Natural killer cell (primary cell): ENCODE measurements at regions of chr4 and their contacts with region 1.

Region 1: GRCh38 chr4:77819843-77820648 is 878 bp upstream of the CNOT6L start:
- DNase-seq: peak; percentile 95 to 98
- ATAC-seq: peak; percentile 72 to 90 (median 77)
- H3K4me3 ChIP-seq: peak overlapping the region; percentile 78
- H3K4me3 Mint-ChIP-seq: peak overlapping the region; percentile 88
- H3K27ac ChIP-seq: peak overlapping the region; percentile 95
- H3K27ac Mint-ChIP-seq: peak overlapping the region; percentile 99 to 100
- H3K4me1 ChIP-seq: peaks cover 34% of the 10 kb centered on the region
- H3K4me1 Mint-ChIP-seq: peaks cover 59 to 67% of the 10 kb centered on the region in 2 donors
- H3K27me3 ChIP-seq: no peaks in the 10 kb centered on the region
- H3K27me3 Mint-ChIP-seq: no peaks in the 10 kb centered on the region
- CTCF ChIP-seq: no peak

Region 2: DNA sequence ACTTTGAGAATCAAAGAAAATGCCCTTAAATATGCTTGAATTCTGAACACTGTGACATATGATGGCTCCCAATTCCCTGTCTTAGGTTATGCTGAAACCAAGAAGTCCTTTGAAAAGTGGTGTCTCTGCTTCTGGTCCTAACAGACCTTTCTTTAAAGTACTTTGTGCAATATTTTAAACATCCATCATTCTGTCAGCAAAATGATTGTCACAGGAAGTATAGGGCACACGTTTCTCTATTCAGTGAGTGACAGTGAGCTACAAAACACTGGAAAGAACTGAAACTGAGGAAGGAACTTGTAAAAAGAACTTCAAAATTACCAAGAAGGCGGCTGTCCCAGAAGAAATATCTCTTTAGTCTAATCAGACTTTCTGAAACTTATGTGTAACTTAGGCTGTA is 1659.7 kb before region 1 on chr4:
- intact Hi-C with region 1: no loop called
- DNase-seq: no peak
- ATAC-seq: no peak
- H3K4me3 ChIP-seq: no peak overlapping the region
- H3K4me3 Mint-ChIP-seq: no peak overlapping the region
- H3K27ac ChIP-seq: no peak overlapping the region
- H3K27ac Mint-ChIP-seq: no peak overlapping the region
- H3K4me1 ChIP-seq: no peaks in the 10 kb centered on the region
- H3K4me1 Mint-ChIP-seq: no peaks in the 10 kb centered on the region
- H3K27me3 ChIP-seq: no peaks in the 10 kb centered on the region
- H3K27me3 Mint-ChIP-seq: no peaks in the 10 kb centered on the region
- CTCF ChIP-seq: no peak

Region 3: GRCh38 chr4:77650787-77651186 is 169.3 kb before region 1 on chr4:
- intact Hi-C with region 1: no loop called
- DNase-seq: no peak
- ATAC-seq: no peak
- H3K4me3 ChIP-seq: no peak overlapping the region
- H3K4me3 Mint-ChIP-seq: no peak overlapping the region
- H3K27ac ChIP-seq: no peak overlapping the region
- H3K27ac Mint-ChIP-seq: no peak overlapping the region
- H3K4me1 ChIP-seq: no peaks in the 10 kb centered on the region
- H3K4me1 Mint-ChIP-seq: no peaks in the 10 kb centered on the region
- H3K27me3 ChIP-seq: no peaks in the 10 kb centered on the region
- H3K27me3 Mint-ChIP-seq: peaks cover 0 to 5% of the 10 kb centered on the region in 2 donors
- CTCF ChIP-seq: no peak

Region 4: GRCh38 chr4:77734928-77735327 is 85.1 kb before region 1 on chr4:
- intact Hi-C with region 1: loop called (anchors 5 kb)
- DNase-seq: peak; percentile 19 to 69
- ATAC-seq: peak; percentile 89 to 96 (median 91)
- H3K4me3 ChIP-seq: no peak overlapping the region
- H3K4me3 Mint-ChIP-seq: peak overlapping the region; percentile 84
- H3K27ac ChIP-seq: peak overlapping the region; percentile 47
- H3K27ac Mint-ChIP-seq: peak overlapping the region; percentile 87 to 89
- H3K4me1 ChIP-seq: peaks cover 3% of the 10 kb centered on the region
- H3K4me1 Mint-ChIP-seq: peaks cover 43 to 66% of the 10 kb centered on the region in 2 donors
- H3K27me3 ChIP-seq: no peaks in the 10 kb centered on the region
- H3K27me3 Mint-ChIP-seq: no peaks in the 10 kb centered on the region
- CTCF ChIP-seq: no peak

Region 5: DNA sequence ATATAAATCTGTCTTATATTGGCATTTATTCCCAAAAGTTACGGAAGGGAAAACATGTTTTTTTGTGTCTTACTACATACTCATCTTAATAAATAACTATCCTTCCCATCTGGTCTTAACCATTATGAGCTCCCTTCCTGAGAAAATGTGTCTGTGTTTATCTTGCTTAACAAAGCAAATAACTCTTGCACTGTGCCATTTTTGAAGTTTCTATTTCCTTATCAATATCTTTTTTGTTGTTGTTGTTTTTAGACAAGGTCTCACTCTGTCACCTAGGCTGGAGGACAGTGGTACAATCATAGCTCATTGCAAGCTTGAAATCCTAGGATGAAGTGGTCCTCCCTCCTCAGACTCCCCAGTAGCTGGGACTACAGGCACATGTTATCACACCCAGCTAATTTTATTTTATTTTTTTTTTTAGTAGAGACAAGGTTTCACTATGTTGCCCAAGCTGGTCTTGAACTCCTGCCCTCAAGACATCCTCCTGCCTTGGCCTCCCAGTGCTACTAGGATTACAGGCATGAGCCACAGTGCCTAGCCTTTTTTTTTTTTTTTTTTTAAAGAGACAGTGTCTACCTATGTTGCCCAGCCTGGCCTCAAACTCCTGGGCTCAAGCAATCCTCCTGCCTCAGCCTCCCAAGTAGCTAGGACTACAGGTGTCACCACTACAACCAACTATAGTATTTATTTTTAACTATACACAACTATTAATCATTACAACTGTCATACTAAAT is 37.8 kb before region 1 on chr4:
- intact Hi-C with region 1: loop called (anchors 5 kb)
- DNase-seq: no peak
- ATAC-seq: no peak
- H3K4me3 ChIP-seq: no peak overlapping the region
- H3K4me3 Mint-ChIP-seq: peak overlapping the region; percentile 35
- H3K27ac ChIP-seq: peak overlapping the region; percentile 2
- H3K27ac Mint-ChIP-seq: peak overlapping the region; percentile 77 to 86
- H3K4me1 ChIP-seq: peaks cover 15% of the 10 kb centered on the region
- H3K4me1 Mint-ChIP-seq: peaks cover 68 to 72% of the 10 kb centered on the region in 2 donors
- H3K27me3 ChIP-seq: no peaks in the 10 kb centered on the region
- H3K27me3 Mint-ChIP-seq: no peaks in the 10 kb centered on the region
- CTCF ChIP-seq: no peak

Region 6: DNA sequence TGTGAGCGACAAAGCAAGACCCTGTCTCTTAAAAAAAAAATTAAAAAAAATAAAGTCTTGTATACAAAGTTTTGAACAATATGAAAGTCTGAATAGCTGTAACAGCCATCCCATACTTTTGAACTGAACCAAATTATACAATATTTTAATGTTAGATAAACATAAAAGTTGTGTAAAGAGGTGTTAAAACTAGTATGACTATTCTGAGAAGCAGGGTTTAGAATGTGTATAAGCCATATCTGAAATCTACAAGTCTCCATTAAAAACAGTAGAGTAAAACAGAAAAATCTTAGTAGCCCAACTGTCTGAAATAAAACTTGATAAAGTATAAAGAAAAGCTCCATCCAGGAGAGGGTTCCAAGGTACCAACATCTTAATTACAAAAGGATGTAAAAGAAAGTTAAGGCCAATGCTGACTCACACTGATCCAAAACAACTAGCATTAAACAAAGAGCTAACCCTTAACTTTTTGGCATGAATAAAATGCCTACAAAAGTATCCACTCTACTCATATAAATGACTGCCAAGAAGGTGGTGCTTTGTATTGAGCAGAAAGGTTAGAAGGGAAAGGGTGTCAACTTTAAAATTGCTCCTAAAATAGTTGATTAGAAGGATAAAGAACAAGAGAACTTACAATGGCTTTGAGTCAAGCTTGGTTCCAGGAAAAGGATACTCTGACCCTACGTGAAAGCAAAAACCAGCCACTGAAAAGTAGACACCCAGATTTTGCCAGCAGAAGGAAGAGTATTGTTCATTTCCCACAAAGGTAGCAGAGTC is 19.4 kb before region 1 on chr4:
- intact Hi-C with region 1: loop called (anchors 2 kb)
- DNase-seq: no peak
- ATAC-seq: peak; percentile 14 to 27 (median 17)
- H3K4me3 ChIP-seq: no peak overlapping the region
- H3K4me3 Mint-ChIP-seq: peak overlapping the region; percentile 54
- H3K27ac ChIP-seq: peak overlapping the region; percentile 37
- H3K27ac Mint-ChIP-seq: peak overlapping the region; percentile 77 to 93
- H3K4me1 ChIP-seq: peaks cover 41% of the 10 kb centered on the region
- H3K4me1 Mint-ChIP-seq: peaks cover 80 to 83% of the 10 kb centered on the region in 2 donors
- H3K27me3 ChIP-seq: no peaks in the 10 kb centered on the region
- H3K27me3 Mint-ChIP-seq: no peaks in the 10 kb centered on the region
- CTCF ChIP-seq: no peak

Region 7: GRCh38 chr4:77852892-77853495 is 32.9 kb after region 1 on chr4:
- intact Hi-C with region 1: loop called (anchors 1 kb)
- DNase-seq: peak; percentile 69 to 92
- ATAC-seq: peak; percentile 76 to 87 (median 84)
- H3K4me3 ChIP-seq: no peak overlapping the region
- H3K4me3 Mint-ChIP-seq: peak overlapping the region; percentile 88
- H3K27ac ChIP-seq: peak overlapping the region; percentile 96
- H3K27ac Mint-ChIP-seq: peak overlapping the region; percentile 97 to 100
- H3K4me1 ChIP-seq: peaks cover 58% of the 10 kb centered on the region
- H3K4me1 Mint-ChIP-seq: peaks cover 51 to 66% of the 10 kb centered on the region in 2 donors
- H3K27me3 ChIP-seq: no peaks in the 10 kb centered on the region
- H3K27me3 Mint-ChIP-seq: no peaks in the 10 kb centered on the region
- CTCF ChIP-seq: no peak

Region 8: DNA sequence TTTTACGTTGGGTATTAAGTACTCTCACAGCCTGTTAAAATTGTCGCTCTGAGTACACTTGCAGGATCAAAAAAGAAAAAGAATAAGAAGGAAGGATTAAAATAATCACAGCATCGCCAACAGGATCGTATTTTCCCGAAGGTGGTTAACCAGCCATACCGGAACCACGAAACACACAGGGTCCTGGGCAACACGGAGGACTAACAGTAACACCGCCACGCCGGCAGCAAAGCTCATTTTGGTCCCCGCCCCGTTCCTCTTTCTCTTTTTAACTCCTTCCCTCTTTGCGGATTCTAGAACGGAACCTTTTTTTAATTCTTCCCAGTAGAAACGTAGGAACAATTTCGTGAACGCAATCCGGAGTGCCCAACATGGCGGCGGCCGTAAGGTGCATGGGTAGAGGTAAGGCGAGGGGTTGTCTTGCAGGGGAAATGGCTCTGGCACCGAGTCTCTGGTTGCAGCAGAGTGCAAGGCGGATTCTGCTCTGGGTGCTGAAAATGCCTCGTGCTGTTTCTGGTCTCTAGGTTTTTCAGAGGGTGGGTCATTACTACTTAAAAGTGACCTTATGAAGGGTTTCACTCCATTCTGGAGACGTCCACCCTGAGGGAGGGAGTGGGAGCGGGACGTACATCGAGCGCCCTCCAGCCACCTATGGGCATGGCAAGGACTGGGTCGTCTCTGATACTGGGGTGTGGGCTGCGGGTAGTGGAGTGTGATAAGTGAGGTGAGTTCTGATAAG is 42.6 kb after region 1 on chr4 and contains the start of gene MRPL1:
- intact Hi-C with region 1: loop called (anchors 1 kb)
- DNase-seq: peak; percentile 80 to 96
- ATAC-seq: peak; percentile 66 to 89 (median 76)
- H3K4me3 ChIP-seq: peak within 1 kb of the TSS; percentile 97
- H3K4me3 Mint-ChIP-seq: peak within 1 kb of the TSS; percentile 94
- H3K27ac ChIP-seq: peak within 1 kb of the TSS; percentile 100
- H3K27ac Mint-ChIP-seq: peak within 1 kb of the TSS; percentile 96 to 100
- H3K4me1 ChIP-seq: peaks cover 20% of the 10 kb centered on the region
- H3K4me1 Mint-ChIP-seq: peaks cover 53 to 64% of the 10 kb centered on the region in 2 donors
- H3K27me3 ChIP-seq: no peaks in the 10 kb centered on the region
- H3K27me3 Mint-ChIP-seq: no peaks in the 10 kb centered on the region
- CTCF ChIP-seq: no peak
- total RNA-seq, gene MRPL1: 17.9 to 22.9 (median 22.9) TPM